ENCODE measurements at regions of chr17 and their contacts with region 1.

Region 1: GRCh38 chr17:38824899-38825761 is at the start of gene CWC25:
- DNase-seq: peak; percentile 93
- ATAC-seq: peak; percentile 84
- H3K4me3 ChIP-seq: peak within 1 kb of the TSS; percentile 91 to 100 (median 93)
- H3K27ac ChIP-seq: peak within 1 kb of the TSS; percentile 98
- H3K4me1 ChIP-seq: peaks cover 21% of the 10 kb centered on the region
- H3K27me3 ChIP-seq: peaks cover 0 to 4% of the 10 kb centered on the region in 2 experiments; a peak in 1 of 5 replicates
- CTCF ChIP-seq: no peak; the same call in 1 of the 2 replicates
- EP300 ChIP-seq: peak; percentile 68 to 96; a peak in 3 of 4 replicates
- POLR2A ChIP-seq: peak; percentile 97 to 98
- RAD21 ChIP-seq: peak; percentile 70
- total RNA-seq, gene CWC25: 12.7 and 15.6 TPM in 2 replicates

Region 2: DNA sequence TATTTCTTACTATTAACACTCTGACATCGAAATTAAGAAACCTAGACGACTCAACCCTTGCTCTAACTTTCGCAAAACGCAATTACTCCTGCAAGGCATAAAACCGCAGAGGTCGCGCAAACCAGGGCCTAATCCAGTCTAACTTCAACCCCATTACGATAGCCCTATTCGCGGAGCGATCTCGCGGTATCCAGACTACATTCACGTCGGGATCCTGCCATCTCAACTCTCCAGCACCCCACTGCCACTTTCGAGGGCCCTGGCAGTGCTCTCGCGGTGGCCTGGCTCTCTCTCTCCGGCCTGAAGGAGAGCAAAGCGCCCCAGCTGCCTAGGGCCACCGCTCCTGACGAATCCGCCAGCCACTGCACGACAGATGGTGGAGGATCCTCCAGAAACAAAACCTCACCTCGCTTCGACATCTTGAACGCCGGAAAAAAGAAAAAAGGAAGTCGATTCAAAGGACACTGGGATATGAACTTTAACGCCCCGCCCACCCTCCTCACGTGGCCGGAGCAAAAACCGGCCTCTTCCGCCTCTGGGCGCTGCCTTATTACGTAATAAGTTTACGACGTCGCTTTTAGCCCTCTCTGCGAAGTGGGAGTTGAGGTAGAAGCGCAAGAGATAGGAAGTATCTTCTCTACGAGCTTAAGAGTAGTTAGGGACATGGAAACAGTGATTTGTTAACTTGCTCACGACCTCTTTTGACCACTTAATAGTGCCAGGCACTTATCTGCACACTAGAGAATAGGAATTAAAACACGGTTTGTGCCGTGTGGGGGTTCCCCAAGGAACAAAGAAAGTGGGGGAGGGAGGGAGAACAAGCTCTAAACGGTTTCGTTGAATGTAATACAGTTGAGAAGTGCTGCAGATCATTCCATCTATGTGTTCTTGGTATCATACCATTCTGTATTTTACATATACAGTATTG is 28.4 kb after region 1 on chr17 and contains the start of gene RPL23:
- CTCF ChIA-PET with region 1: no interaction called
- POLR2A ChIA-PET with region 1: interaction called, 50 read pairs
- in situ Hi-C with region 1: no loop called
- intact Hi-C with region 1: loop called (anchors 1 kb)
- DNase-seq: peak; percentile 97
- ATAC-seq: peak; percentile 91
- H3K4me3 ChIP-seq: peak within 1 kb of the TSS; percentile 78 to 88 (median 82)
- H3K27ac ChIP-seq: peak within 1 kb of the TSS; percentile 84
- H3K4me1 ChIP-seq: peaks cover 44% of the 10 kb centered on the region
- H3K27me3 ChIP-seq: no peaks in the 10 kb centered on the region; a peak in 1 of 5 replicates
- CTCF ChIP-seq: no peak
- EP300 ChIP-seq: peak; percentile 64 to 88; a peak in 3 of 4 replicates
- POLR2A ChIP-seq: peak; percentile 99
- RAD21 ChIP-seq: peak; percentile 56; the same call in 1 of the 2 replicates
- total RNA-seq, gene RPL23: 2,790 and 3,298 TPM in 2 replicates

Measured in HepG2 (cell line).